ENCODE measurements at regions of chr11 and their contacts with region 1.

Region 1: GRCh38 chr11:117026593-117027330 is 71.5 kb downstream of the SIK3 start:
- DNase-seq: peak; percentile 24
- ATAC-seq: peak; percentile 77
- H3K4me3 Mint-ChIP-seq: no peak overlapping the region
- H3K27ac Mint-ChIP-seq: peak overlapping the region; percentile 91
- H3K4me1 Mint-ChIP-seq: peaks cover 67% of the 10 kb centered on the region
- H3K27me3 Mint-ChIP-seq: no peaks in the 10 kb centered on the region
- CTCF ChIP-seq: no peak

Region 2: DNA sequence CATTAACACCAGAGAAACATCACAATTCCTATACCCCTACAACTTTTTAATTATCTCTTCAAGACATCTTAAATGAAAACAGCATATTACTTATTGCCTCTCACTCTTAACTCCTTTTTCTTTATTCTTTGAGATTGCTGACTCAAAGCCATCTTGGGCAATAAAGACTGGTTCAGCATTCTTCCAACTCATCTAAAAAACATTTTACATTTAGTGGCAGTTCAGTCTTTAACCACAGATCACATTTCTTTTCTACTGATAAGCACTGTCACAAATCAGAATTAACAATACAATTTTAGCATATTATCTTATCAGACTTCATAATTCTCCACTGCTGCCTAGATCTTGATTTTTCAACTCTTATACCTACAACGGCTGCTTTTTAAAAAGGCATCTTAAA is 37.5 kb after region 1 on chr11:
- CTCF ChIA-PET with region 1: interaction called, 6 read pairs
- POLR2A ChIA-PET with region 1: no interaction called
- intact Hi-C with region 1: loop called (anchors 5 kb)
- DNase-seq: no peak
- ATAC-seq: no peak
- H3K4me3 Mint-ChIP-seq: no peak overlapping the region
- H3K27ac Mint-ChIP-seq: peak overlapping the region; percentile 90
- H3K4me1 Mint-ChIP-seq: peaks cover 69% of the 10 kb centered on the region
- H3K27me3 Mint-ChIP-seq: no peaks in the 10 kb centered on the region
- CTCF ChIP-seq: no peak

Measured in activated CD8-positive, alpha-beta T cell treated with anti-CD3 and anti-CD28 coated beads for 36 hours (primary cell).